PC-3 (cell line): ENCODE measurements at regions of chr7 and their contacts with region 1.

Region 1: DNA sequence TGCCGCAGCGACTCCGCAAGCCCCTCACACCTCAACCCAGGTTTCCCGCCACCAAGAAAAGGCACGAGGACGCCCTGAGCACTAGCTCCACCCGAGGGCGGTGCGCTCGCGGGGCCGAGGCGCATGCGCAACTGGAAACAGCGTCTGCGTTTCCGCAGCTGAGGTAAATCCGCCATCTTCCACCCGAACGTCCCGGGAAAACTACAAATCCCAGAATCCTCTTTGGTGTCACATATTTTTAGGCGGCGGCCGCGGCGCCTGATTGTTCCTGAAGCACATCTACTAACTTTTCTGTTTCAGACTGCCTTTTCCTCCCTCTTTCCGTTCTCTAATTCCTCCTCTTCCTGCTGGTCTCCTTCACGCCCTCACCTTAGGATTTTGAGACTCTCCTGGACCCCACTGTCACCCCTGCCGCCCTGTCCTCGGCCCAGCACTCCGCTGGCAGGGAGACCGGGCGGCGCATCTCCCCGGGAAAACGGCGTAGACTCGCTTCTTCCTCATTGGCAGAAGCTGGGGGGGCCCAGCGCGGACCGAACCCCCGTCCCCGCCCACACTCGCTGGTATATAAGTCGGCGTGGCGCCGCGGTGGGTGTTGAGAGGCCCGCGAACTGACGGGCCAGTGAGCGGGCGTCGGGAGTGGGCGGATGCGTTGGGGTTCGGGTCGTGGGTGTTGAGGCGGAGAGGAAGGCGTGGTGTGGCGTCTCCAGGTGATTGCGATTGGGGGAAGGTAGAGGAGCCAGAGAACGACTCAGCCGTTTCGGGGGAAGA is at the start of gene ZCWPW1:
- DNase-seq: peak; percentile 90
- ATAC-seq: peak; percentile 66
- H3K4me3 ChIP-seq: peak within 1 kb of the TSS; percentile 80
- H3K27ac ChIP-seq: peak within 1 kb of the TSS; percentile 98
- H3K4me1 ChIP-seq: peaks cover 19% of the 10 kb centered on the region
- H3K27me3 ChIP-seq: no peaks in the 10 kb centered on the region
- CTCF ChIP-seq: no peak
- total RNA-seq, gene ZCWPW1: 1.4 and 2.2 TPM in 2 replicates

Region 2: DNA sequence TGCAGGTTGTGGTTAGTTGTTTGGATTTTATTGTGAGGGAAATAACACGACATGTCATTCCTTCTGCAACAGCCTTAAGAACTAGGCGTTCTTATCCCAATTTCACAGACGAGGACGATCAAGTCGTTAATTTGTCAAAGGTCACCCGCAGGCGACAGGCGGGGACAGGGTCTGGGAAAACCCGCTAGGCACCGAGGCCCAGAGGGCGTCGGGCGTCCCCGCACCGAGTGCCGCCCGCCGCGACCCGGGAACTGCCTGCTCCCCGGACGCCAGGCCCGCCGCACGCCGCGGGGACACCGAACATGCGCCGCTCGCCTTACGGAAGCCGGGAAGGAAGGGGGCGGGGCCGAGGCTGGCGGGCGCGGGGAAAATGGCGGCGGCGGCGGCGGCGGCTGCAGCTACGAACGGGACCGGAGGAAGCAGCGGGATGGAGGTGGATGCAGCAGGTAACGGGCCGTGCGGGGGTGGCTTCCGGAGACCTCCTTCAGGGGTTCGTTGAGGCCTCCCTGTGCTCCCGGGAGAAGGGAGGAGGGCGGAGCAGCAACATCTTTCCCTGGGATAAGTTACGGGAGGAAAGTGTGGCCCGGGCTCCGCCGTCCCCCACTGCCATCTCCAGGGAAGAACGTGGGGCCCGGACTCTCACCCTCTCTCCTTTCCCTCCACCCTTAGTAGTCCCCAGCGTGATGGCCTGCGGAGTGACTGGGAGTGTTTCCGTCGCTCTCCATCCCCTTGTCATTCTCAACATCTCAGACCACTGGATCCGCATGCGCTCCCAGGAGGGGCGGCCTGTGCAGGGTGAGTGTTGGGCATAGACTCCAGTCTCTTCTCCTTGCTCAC is 339.5 kb before region 1 on chr7 and contains the start of gene COPS6:
- CTCF ChIA-PET with region 1: no interaction called
- POLR2A ChIA-PET with region 1: interaction called, 10 read pairs
- intact Hi-C with region 1: no loop called
- DNase-seq: peak; percentile 63
- ATAC-seq: peak; percentile 60
- H3K4me3 ChIP-seq: peak within 1 kb of the TSS; percentile 88
- H3K27ac ChIP-seq: peak within 1 kb of the TSS; percentile 59
- H3K4me1 ChIP-seq: peaks cover 29% of the 10 kb centered on the region
- H3K27me3 ChIP-seq: no peaks in the 10 kb centered on the region
- CTCF ChIP-seq: no peak
- total RNA-seq, gene COPS6: 95.7 and 110 TPM in 2 replicates

Region 3: DNA sequence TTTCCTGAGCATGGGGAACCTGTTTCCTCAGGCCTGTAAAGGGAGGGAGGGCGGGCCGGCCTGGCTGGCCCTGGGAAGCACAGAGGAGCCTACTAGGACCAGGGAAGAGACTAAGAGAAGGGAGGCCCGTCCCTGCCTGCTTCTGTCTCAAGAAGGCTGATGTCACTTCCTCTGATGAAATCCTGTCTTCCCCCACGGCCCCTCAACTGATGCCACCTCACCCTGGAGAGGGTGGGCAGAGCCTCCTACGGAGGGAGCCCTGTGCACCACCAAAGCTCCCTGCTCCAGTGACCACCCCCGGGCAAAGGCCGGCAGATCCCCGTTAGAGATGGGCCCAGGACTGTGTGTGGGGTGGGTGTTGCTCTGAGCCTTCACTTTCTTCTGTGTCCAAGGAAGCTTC is 56.1 kb before region 1 on chr7:
- CTCF ChIA-PET with region 1: no interaction called
- POLR2A ChIA-PET with region 1: interaction called, 28 read pairs
- intact Hi-C with region 1: no loop called
- DNase-seq: no peak
- ATAC-seq: no peak; the same call in 1 of the 2 replicates
- H3K4me3 ChIP-seq: no peak overlapping the region
- H3K27ac ChIP-seq: no peak overlapping the region
- H3K4me1 ChIP-seq: no peaks in the 10 kb centered on the region
- H3K27me3 ChIP-seq: no peaks in the 10 kb centered on the region
- CTCF ChIP-seq: no peak

Region 4: DNA sequence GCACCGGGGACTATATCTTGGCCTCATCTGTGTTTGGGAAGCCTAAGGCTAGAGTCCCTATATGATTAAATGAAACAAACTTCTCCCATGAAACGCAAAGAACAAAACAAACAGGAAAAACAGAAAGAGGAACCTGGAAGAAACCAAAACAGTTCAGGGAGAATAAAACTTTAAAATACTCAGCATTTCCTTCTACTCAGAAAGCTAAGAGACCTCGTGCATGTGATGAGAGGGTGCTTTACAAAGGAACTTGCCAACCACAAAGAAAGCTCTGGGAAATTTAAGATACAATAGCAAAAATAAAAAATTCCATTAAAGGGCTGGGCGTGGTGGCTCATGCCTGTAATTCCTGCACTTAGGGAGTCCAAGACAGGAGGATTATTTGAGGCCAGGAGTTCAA is 48.2 kb before region 1 on chr7:
- CTCF ChIA-PET with region 1: no interaction called
- POLR2A ChIA-PET with region 1: interaction called, 28 read pairs
- intact Hi-C with region 1: no loop called
- DNase-seq: no peak
- ATAC-seq: no peak
- H3K4me3 ChIP-seq: no peak overlapping the region
- H3K27ac ChIP-seq: no peak overlapping the region
- H3K4me1 ChIP-seq: no peaks in the 10 kb centered on the region
- H3K27me3 ChIP-seq: no peaks in the 10 kb centered on the region
- CTCF ChIP-seq: no peak

Region 5: GRCh38 chr7:100726996-100727761 is 298.8 kb after region 1 on chr7:
- CTCF ChIA-PET with region 1: no interaction called
- POLR2A ChIA-PET with region 1: no interaction called
- intact Hi-C with region 1: no loop called
- DNase-seq: peak; percentile 41
- ATAC-seq: 0 out of 2 replicates have a peak, but pooled peaks have one; percentile 14
- H3K4me3 ChIP-seq: no peak overlapping the region
- H3K27ac ChIP-seq: no peak overlapping the region
- H3K4me1 ChIP-seq: peaks cover 13% of the 10 kb centered on the region
- H3K27me3 ChIP-seq: no peaks in the 10 kb centered on the region
- CTCF ChIP-seq: no peak

Region 6: GRCh38 chr7:101138213-101138870 is 710.0 kb after region 1 on chr7:
- CTCF ChIA-PET with region 1: no interaction called
- POLR2A ChIA-PET with region 1: no interaction called
- intact Hi-C with region 1: no loop called
- DNase-seq: peak; percentile 97
- ATAC-seq: peak; percentile 83
- H3K4me3 ChIP-seq: peak overlapping the region; percentile 41; the same call in 1 of the 2 replicates
- H3K27ac ChIP-seq: peak overlapping the region; percentile 89
- H3K4me1 ChIP-seq: peaks cover 44% of the 10 kb centered on the region
- H3K27me3 ChIP-seq: no peaks in the 10 kb centered on the region
- CTCF ChIP-seq: peak; percentile 98